ENCODE measurements at regions of chr7 and their contacts with region 1.

Region 1: DNA sequence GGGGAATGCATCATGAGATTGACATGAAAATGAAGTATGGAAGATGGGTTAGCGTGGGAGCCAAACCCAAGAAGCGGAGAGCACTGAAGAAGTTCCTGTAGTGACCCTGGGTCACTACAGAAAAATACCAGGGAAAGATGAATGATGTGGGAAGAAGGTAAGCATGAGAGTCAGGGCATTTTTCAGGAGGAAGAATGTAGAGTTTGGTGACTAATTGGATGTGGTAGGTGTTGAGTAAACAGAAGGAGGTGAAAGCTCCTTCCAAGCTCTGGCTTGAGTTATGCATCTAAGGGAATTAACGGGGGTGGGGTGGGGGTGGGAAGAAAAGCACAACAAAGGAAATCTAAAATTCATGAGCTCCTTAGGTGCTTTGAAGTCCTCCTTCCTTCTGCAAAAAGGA is 238.1 kb upstream of the AOAH start:
- DNase-seq: no peak
- H3K4me3 Mint-ChIP-seq: no peak overlapping the region
- H3K27ac Mint-ChIP-seq: peak overlapping the region; percentile 55
- H3K4me1 Mint-ChIP-seq: peaks cover 44% of the 10 kb centered on the region
- H3K27me3 Mint-ChIP-seq: no peaks in the 10 kb centered on the region

Region 2: DNA sequence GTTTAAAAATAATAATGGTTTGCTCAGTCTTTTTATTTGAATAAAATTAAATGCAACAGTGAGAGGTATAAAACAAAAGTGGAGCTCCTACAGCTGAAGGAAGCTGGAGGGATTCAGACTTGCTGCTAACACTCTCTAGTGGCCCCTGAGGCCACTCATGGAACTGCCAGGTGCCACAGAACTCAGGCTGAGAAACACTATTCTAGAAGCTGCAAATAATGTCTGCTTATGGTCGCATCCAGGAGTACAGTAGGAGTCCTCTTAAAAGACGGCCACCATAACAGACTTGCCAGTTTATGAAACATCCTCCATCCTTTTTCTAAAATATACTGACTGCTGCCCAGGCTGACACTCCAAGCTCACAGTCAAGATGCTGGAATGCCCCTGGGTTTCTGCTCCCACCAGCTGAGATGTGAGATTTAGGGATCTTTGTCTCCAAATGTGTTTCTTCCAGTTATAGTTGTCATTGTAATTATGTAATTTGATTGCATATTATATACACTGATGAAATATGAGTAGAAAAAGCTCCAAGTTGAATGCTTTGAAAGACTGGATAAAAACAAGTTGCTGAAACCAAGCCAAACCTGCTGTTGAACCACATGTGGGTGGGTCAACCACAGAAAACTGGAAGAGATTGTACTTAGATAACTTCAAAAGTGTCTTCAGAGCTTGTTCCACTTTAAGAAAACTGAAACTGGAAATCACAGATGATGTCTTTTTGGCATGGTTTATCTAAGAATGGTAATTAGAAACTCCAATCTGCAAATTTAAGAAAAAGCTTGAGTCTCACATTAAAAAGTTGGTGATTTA is 24.4 kb before region 1 on chr7:
- intact Hi-C with region 1: loop called (anchors 1 kb)
- DNase-seq: peak; percentile 59
- H3K4me3 Mint-ChIP-seq: peak overlapping the region; percentile 49
- H3K27ac Mint-ChIP-seq: peak overlapping the region; percentile 65
- H3K4me1 Mint-ChIP-seq: peaks cover 51% of the 10 kb centered on the region
- H3K27me3 Mint-ChIP-seq: no peaks in the 10 kb centered on the region